ENCODE measurements at regions of chr5 and their contacts with region 1.

Region 1: GRCh38 chr5:93236804-93237421 is 344.1 kb downstream of the NR2F1-AS1 start:
- DNase-seq: peak; percentile 90
- ATAC-seq: peak; percentile 90
- H3K4me3 ChIP-seq: no peak overlapping the region
- H3K27ac ChIP-seq: peak overlapping the region; percentile 73
- H3K4me1 ChIP-seq: peaks cover 45% of the 10 kb centered on the region
- H3K27me3 ChIP-seq: no peaks in the 10 kb centered on the region
- CTCF ChIP-seq: peak; percentile 35; the same call in 1 of the 2 replicates

Region 2: DNA sequence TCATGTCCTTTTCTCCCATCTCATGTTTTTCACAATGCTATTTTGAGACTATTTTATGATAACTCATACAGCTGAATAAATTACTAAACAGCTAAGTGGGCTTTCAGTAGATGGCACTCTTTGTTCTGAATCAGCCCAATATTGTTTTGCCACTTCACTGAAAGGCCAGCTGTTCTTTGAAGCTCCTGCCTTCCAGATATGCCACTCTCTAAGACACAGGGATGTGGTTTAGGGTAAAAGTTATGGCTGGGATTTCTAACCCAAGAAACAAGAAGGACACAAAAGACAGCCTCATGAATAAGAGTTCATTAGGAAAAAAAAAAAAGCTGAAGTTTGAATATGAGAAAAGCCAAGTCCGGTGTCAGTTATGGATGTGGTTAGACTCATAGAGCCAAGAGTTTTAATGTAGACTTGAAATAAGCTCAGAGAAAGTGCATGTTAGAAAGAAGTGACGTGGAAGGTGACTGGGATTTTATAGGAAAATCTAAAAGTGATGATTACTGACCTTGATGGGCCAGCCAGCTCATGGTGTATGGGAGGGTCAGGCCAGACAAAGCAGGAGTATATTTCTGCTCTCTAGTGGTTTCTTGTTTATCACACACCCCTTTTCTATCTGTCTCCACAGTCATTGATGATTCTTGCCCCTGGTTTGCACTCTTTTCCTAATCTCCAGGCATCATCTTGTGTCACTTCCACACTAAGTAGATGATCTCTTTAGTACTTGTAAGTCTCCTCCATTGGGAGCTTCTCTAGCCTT is 144.4 kb before region 1 on chr5:
- CTCF ChIA-PET with region 1: interaction called, 5 read pairs
- POLR2A ChIA-PET with region 1: no interaction called
- intact Hi-C with region 1: loop called (anchors 2 kb)
- DNase-seq: peak; percentile 65
- ATAC-seq: peak; percentile 87
- H3K4me3 ChIP-seq: no peak overlapping the region
- H3K27ac ChIP-seq: peak overlapping the region; percentile 24; the same call in 1 of the 2 replicates
- H3K4me1 ChIP-seq: peaks cover 14% of the 10 kb centered on the region
- H3K27me3 ChIP-seq: no peaks in the 10 kb centered on the region
- CTCF ChIP-seq: peak; percentile 74

Region 3: DNA sequence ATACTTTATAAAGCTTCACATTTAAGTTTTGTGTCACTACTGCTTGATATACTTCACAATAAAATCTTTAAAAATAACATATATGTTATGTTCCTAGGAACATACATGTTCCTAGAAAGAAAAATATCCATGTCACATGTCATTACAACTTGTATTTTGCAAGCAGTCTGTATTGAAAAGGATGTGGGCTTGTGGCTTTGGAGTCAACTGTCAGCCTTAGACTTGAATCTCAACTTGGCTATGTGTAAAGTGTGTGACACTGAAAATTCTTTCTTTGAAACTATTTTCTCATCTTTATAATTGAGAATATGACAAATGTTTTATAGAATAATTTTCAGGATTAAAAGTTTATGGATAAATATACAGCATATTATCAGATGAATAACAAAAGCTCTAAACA is 1108.3 kb after region 1 on chr5:
- CTCF ChIA-PET with region 1: no interaction called
- POLR2A ChIA-PET with region 1: no interaction called
- intact Hi-C with region 1: no loop called
- DNase-seq: no peak
- ATAC-seq: no peak
- H3K4me3 ChIP-seq: no peak overlapping the region
- H3K27ac ChIP-seq: no peak overlapping the region
- H3K4me1 ChIP-seq: no peaks in the 10 kb centered on the region
- H3K27me3 ChIP-seq: no peaks in the 10 kb centered on the region
- CTCF ChIP-seq: no peak

Measured in PC-3 (cell line).